ENCODE measurements at regions of chr5 and their contacts with region 1.

Region 1: DNA sequence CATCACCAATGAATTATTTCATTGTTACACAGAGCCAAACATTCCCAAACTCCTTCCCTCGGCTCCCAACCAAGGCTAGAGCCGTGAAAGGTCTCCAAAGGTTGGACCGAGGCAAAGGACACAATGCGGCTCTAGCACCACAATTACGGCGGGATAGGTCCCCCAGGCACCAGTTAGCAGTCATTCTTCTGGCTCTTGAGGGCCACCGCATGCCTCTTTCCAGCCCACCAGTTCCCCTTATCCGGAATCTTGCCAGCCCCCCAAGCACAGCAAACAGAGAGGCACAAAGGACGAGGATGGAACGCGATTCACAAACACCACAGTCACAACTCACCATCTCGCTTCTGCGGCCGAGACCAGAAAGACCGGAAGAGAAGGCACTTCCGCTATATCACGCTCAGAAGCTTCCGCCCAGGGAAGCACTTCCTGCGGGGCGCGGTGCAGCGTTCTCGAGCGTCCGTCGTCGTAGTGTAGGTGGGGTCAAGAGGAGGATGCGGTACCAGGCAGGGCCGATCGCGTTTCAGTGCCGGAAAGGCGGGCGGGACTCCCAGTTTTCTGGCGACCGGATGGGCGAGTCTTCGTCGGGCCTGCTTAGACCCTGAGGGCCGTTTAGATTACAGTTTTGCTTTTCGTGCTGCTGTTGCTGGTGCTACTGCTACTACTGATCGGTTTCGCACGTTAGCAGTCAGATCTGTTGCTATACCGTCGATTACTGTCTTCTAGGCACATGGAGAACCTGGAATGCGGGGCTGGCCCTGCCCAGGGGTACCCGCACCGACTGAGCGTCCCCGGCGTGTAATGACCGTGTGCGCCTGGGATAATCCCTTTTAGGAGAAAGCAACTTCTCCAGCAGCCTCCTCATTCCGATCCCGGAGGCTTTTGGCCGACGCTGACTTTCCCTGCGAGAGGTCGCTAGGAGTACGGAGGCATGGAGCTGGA is at the start of gene RPL37:
- DNase-seq: peak; percentile 92

Region 2: GRCh38 chr5:40823459-40823858 is 11.7 kb before region 1 on chr5:
- CTCF ChIA-PET with region 1: no interaction called
- POLR2A ChIA-PET with region 1: interaction called, 10 read pairs
- DNase-seq: no peak

Region 3: DNA sequence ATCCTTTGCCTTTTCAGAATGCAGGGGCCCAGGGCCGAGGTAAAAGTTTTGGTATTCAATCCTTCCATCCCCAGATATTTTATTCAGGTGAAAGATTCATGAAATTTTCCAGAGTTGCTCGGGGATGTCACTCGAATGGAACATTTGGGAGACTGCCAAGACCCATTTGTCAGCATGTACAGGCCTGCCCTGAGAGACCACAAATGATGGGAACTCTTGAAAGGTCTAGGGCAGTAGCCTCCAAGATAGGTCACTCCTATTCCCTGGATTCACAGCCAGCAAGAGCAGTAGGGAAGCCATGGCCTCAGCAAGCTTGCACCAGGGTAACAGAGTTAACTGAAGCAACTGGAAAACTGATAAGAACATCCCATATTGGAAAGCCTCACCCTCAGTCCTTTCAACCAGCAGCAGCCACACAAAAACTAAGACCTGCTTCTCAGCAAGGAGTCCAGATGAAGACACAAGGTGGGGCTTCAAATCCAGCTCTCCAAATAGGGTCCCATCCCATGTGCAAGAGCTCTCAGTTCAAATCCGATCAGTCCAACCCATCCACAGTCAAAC is 18.6 kb after region 1 on chr5:
- CTCF ChIA-PET with region 1: no interaction called
- POLR2A ChIA-PET with region 1: interaction called, 11 read pairs
- DNase-seq: no peak

Region 4: DNA sequence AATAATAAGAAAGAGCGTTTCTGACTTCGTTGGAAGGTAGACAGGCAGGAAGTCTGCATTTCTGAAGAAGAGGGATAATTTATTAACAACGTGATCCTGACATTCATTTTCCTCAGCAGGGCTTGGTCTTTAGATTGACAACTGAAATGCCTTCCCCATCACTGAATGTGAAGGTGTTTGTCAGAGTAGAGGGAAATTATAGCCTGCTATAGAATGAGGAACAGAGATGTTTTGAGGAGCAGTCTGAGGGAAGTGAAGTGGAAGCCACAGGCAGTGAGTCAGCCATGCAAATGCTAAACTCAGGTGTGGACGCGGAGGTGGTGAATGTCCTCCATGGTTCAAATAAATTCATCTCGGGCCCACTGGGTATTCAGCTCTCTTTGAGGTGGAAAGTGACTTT is 104.6 kb after region 1 on chr5:
- CTCF ChIA-PET with region 1: no interaction called
- POLR2A ChIA-PET with region 1: no interaction called
- DNase-seq: no peak

Region 5: GRCh38 chr5:41503310-41503709 is 668.2 kb after region 1 on chr5:
- CTCF ChIA-PET with region 1: no interaction called
- POLR2A ChIA-PET with region 1: no interaction called
- DNase-seq: no peak

Measured in HEK293T (cell line).